Psoas muscle (tissue), 8 donors: ENCODE measurements at regions of chr15 and their contacts with region 1.

Region 1: DNA sequence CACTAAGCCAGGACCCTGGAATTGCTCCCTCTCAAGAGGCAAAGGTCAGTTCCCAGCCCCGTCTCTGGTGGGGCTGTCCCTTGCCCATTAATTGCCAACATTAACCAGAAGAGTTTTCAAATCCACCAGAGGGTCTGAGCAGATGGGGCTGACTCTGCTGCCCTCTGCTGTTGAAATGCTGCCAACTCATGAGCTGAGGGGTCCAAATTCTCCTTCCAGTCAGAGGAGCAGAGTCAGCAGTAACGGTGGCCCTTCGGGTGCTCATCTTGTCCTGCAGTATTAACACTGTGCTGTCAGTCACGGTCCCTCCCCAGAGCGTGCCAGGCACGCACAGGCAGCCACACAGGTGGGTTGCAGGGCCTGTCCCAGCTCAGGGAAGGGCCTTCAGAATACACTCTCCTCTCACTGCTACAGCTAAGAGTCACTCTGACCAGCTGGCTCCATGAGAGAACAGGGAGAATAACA is 10.7 kb upstream of the SPTBN5 start:
- DNase-seq: peak in 1 of 2 donors; percentile 54
- ATAC-seq: peak; percentile 74 to 90 (median 82)
- H3K4me3 ChIP-seq: no peak overlapping the region
- H3K27ac ChIP-seq: no peak overlapping the region
- H3K4me1 ChIP-seq: peaks cover 8% of the 10 kb centered on the region
- H3K27me3 ChIP-seq: no peaks in the 10 kb centered on the region
- CTCF ChIP-seq: peak; percentile 74

Region 2: DNA sequence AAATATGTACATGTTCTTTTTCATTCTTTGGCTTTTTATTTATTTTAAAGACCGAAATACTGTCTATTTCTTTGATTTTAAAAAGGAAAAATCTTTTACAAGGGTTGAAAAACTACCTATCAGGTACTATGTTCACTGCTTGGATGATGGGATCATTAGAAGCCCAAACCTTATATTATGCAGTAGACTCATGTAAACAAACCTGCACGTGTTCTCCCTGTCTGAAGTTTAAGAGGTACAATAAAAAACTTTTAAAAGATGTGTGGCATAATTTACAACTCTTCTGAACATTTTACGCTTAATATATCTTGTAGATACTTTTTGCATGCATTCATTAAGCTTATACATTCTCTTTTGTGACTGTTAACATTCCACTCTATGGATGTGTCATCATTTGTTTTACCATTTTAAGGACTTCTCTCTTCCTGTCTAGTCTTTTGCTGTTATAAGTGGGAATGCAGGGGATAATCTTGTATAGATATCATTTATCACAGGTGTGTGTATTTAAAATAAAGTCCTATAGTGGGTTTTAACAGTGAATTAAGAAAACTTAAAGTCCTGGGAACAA is 238.1 kb before region 1 on chr15:
- intact Hi-C with region 1: no loop called
- DNase-seq: no peak
- ATAC-seq: no peak
- H3K4me3 ChIP-seq: no peak overlapping the region
- H3K27ac ChIP-seq: no peak overlapping the region
- H3K4me1 ChIP-seq: peaks cover 14% of the 10 kb centered on the region
- H3K27me3 ChIP-seq: no peaks in the 10 kb centered on the region
- CTCF ChIP-seq: no peak

Region 3: DNA sequence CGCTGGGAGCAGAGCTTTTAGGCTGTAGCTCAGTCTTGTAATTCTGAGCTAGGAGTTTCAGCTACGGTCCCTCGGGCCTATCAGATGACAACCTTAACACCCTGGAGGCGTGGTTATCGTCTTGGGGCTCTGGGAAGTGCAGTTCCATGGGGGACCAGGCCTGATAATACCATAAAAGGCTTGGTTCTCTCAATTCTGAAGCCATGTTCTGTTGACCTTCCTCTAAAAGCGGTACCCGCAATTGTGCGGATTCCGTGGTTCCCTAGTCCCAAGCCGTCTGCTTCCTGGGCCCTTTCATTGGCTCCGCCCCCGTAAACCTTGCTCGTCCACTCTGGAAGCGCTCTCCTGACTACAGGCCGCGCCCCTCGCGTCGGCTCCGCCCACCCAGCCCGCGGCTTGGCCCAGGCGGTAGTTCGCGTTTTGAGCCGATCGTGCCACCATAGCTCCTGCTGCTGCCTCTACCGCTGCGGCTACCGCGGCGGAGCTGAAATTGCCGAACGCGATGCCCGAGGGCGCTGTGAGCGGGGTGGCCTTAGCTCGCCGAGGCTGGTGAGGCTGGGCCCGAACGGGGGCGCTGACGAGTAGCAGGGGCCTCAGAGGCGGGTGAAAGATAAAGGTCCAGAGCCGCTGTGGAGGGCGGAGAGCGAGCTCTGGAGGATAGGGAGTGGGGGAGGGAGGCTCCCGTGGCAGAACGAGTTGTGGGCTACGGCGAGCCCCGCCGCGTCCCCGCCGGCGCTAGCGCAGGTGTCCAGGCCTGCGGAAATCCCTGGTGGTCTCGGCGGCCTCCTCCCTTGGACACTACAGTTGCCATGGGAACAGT is 130.3 kb before region 1 on chr15 and contains the start of gene MAPKBP1:
- intact Hi-C with region 1: loop called (anchors 1 to 10 kb)
- DNase-seq: peak; percentile 98 to 99
- ATAC-seq: peak; percentile 95 to 98 (median 98)
- H3K4me3 ChIP-seq: peak within 1 kb of the TSS; percentile 90
- H3K27ac ChIP-seq: peak within 1 kb of the TSS; percentile 86
- H3K4me1 ChIP-seq: peaks cover 35% of the 10 kb centered on the region
- H3K27me3 ChIP-seq: no peaks in the 10 kb centered on the region
- CTCF ChIP-seq: peak; percentile 57
- total RNA-seq, gene MAPKBP1: 7.1 to 10.3 (median 8.1) TPM

Region 4: GRCh38 chr15:41779662-41780157 is 124.9 kb before region 1 on chr15:
- intact Hi-C with region 1: loop called (anchors 1 to 10 kb)
- DNase-seq: no peak
- ATAC-seq: peak; percentile 88 to 95 (median 91)
- H3K4me3 ChIP-seq: no peak overlapping the region
- H3K27ac ChIP-seq: peak overlapping the region; percentile 61
- H3K4me1 ChIP-seq: peaks cover 27% of the 10 kb centered on the region
- H3K27me3 ChIP-seq: no peaks in the 10 kb centered on the region
- CTCF ChIP-seq: no peak

Region 5: GRCh38 chr15:41944313-41944940 is 39.9 kb after region 1 on chr15:
- intact Hi-C with region 1: no loop called
- DNase-seq: peak; percentile 69 to 77
- ATAC-seq: peak in 3 of 4 donors; percentile 52 to 67 (median 53)
- H3K4me3 ChIP-seq: no peak overlapping the region
- H3K27ac ChIP-seq: peak overlapping the region; percentile 57
- H3K4me1 ChIP-seq: peaks cover 3% of the 10 kb centered on the region
- H3K27me3 ChIP-seq: no peaks in the 10 kb centered on the region
- CTCF ChIP-seq: no peak